CD14-positive monocyte (primary cell): ENCODE measurements at regions of chr10 and their contacts with region 1.

Region 1: DNA sequence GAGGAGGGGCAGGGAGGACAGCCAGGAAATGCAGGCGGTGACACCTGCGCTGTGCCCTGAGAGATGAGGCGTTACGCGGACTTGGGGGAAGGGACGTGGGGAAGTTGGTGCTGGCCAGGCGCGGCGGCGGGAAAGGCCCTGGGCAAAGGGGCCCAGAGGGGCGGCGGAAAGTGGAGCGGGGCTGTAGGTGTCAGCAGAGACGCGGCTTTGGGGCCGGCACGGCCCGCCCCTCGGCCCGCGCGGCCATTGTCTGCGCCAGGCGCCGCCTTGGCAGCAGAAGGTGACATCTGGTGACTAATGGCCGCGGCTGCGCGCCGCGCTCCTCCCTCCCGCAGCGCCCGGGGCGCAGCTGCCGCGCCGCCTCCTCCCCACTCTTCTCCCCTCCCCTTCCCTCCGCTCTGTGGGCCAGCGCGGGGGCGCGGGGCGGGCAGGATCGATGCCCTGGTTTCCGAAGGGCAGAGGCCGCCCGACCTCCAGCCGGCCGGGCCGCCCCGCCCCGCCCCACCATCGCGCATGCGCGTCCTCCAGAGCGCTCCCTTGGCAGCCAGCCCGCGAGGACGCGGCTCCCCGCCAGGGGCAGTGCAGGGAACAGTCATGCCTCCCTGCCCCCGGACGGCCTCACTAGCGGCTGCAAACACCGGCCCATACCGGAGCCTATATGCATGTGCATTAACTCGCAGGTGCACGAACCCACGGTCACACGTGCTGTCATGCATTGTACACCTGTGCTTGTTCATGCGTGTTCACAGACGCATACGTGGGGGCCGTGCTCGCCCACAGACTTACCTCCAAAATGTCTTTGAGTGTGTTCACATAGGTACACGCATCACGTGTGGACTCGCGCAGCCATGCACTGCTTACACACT is 269.6 kb downstream of the RPS24 start:
- DNase-seq: peak; percentile 84 to 89 (median 87)
- H3K4me3 ChIP-seq: peak overlapping the region; percentile 56 to 77 (median 58)
- H3K4me3 Mint-ChIP-seq: peak overlapping the region; percentile 84 to 93
- H3K27ac ChIP-seq: peak overlapping the region; percentile 85 to 91
- H3K27ac Mint-ChIP-seq: peak overlapping the region; percentile 93 to 97 (median 95)
- H3K4me1 ChIP-seq: peaks cover 37% of the 10 kb centered on the region in 2 donors
- H3K4me1 Mint-ChIP-seq: peaks cover 39% of the 10 kb centered on the region
- H3K27me3 ChIP-seq: no peaks in the 10 kb centered on the region
- H3K27me3 Mint-ChIP-seq: peaks cover 1 to 6% (median 4%) of the 10 kb centered on the region in 3 donors
- CTCF ChIP-seq: peak; percentile 84

Region 2: GRCh38 chr10:78029269-78030226 is 273.7 kb before region 1 on chr10 and contains the start of gene POLR3A:
- intact Hi-C with region 1: loop called in 1 of 2 experiments (anchors 5 kb)
- DNase-seq: peak; percentile 89 to 95 (median 94)
- H3K4me3 ChIP-seq: peak within 1 kb of the TSS; percentile 69 to 98 (median 74)
- H3K4me3 Mint-ChIP-seq: peak within 1 kb of the TSS; percentile 100
- H3K27ac ChIP-seq: peak within 1 kb of the TSS; percentile 39 to 75
- H3K27ac Mint-ChIP-seq: peak within 1 kb of the TSS; percentile 82 to 96 (median 93)
- H3K4me1 ChIP-seq: peaks cover 29% of the 10 kb centered on the region in 2 donors
- H3K4me1 Mint-ChIP-seq: peaks cover 32% of the 10 kb centered on the region
- H3K27me3 ChIP-seq: no peaks in the 10 kb centered on the region
- H3K27me3 Mint-ChIP-seq: peaks cover 0 to 6% (median 2%) of the 10 kb centered on the region in 3 donors
- CTCF ChIP-seq: peak; percentile 73
- polyA plus RNA-seq, gene POLR3A: 2.7 to 5.2 (median 4.7) TPM

Region 3: DNA sequence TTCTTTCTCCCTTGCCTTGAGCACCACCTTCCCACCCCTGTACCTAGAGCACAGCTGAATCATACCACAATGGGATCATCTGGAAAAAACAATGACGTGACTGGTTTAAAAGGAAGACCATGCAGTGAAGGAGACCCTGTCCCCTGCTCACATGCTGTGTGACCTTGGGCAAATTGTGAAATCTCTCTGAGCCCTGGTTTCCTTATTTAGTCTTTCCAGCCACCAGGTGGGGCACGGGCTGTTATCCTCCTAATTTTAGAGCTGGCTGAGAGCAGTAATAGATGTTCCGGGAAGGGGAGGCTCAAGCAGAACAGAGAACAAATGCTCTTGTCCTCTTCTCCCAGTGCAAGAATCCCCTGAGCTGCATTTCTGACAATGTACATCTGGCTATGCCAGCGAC is 71.3 kb before region 1 on chr10:
- intact Hi-C with region 1: loop called in 1 of 2 experiments (anchors 5 kb)
- DNase-seq: peak in 2 of 3 donors; percentile 36 to 47
- H3K4me3 ChIP-seq: no peak overlapping the region
- H3K4me3 Mint-ChIP-seq: no peak overlapping the region
- H3K27ac ChIP-seq: no peak overlapping the region
- H3K27ac Mint-ChIP-seq: peak overlapping the region in 1 of 7 donors; percentile 19
- H3K4me1 ChIP-seq: peaks cover 6 to 10% of the 10 kb centered on the region in 2 donors
- H3K4me1 Mint-ChIP-seq: peaks cover 8% of the 10 kb centered on the region
- H3K27me3 ChIP-seq: no peaks in the 10 kb centered on the region
- H3K27me3 Mint-ChIP-seq: peaks cover 7 to 12% (median 11%) of the 10 kb centered on the region in 3 donors
- CTCF ChIP-seq: peak; percentile 41

Region 4: GRCh38 chr10:78255796-78256638 is 47.2 kb before region 1 on chr10:
- intact Hi-C with region 1: loop called (anchors 5 to 10 kb)
- DNase-seq: peak; percentile 88 to 96 (median 94)
- H3K4me3 ChIP-seq: no peak overlapping the region
- H3K4me3 Mint-ChIP-seq: no peak overlapping the region
- H3K27ac ChIP-seq: peak overlapping the region in 1 of 2 donors; percentile 58
- H3K27ac Mint-ChIP-seq: peak overlapping the region; percentile 10 to 88 (median 72)
- H3K4me1 ChIP-seq: peaks cover 46 to 56% of the 10 kb centered on the region in 2 donors
- H3K4me1 Mint-ChIP-seq: peaks cover 68% of the 10 kb centered on the region
- H3K27me3 ChIP-seq: no peaks in the 10 kb centered on the region
- H3K27me3 Mint-ChIP-seq: peaks cover 0 to 17% (median 6%) of the 10 kb centered on the region in 3 donors
- CTCF ChIP-seq: no peak